Gastrocnemius medialis (tissue), 4 donors: ENCODE measurements at regions of chr3 and their contacts with region 1.

Region 1: GRCh38 chr3:40179016-40179415 is 130.5 kb upstream of the EIF1B start:
- DNase-seq: peak; percentile 32 to 48
- ATAC-seq: peak; percentile 55 to 78
- H3K4me3 ChIP-seq: no peak overlapping the region
- H3K27ac ChIP-seq: no peak overlapping the region
- H3K4me1 ChIP-seq: no peaks in the 10 kb centered on the region
- H3K27me3 ChIP-seq: no peaks in the 10 kb centered on the region
- CTCF ChIP-seq: peak; percentile 48 to 74 (median 69)
- POLR2A ChIP-seq: no peak

Region 2: DNA sequence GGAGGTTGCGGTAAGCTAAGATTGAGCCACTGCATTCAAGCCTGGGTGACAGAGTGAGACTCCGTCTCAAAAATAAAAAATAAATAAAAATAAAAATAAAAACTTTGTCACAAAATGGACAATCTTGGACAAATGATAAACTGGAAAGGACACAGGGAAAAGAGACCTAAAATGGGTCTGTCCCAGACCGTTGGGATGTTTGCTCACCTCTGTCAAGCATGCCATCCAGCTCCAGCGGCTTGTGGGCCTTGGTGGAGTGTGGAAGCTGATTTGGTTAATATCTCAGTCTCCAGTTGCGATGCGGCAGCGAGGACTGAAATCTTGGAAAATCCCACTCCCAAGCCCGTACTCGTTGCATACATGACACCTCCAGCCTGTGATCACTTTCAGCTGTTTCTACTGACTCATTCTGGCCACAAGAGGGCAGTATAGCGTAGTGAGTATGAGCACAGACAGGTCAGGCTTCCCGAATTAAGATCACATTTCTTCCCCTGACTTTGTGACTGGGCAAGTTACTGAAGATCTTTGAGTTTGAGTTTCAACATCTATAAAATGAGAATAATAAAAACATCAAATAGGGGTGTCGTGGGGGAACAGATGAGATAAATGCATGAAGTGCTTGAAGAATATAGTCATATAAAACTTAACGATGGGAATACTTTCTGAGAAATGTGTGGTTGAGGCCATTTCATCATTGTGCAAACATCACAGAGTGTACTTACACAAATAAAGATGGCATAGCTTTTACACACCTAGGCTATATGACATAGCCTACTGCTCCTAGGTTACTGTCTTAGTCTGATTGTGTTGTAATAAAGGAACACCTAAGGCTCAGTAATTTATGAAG is 731.2 kb before region 1 on chr3:
- in situ Hi-C with region 1: no loop called
- intact Hi-C with region 1: loop called (anchors 5 kb)
- DNase-seq: peak; percentile 44 to 50
- ATAC-seq: peak; percentile 98
- H3K4me3 ChIP-seq: no peak overlapping the region
- H3K27ac ChIP-seq: no peak overlapping the region
- H3K4me1 ChIP-seq: no peaks in the 10 kb centered on the region
- H3K27me3 ChIP-seq: no peaks in the 10 kb centered on the region
- CTCF ChIP-seq: peak; percentile 71 to 88 (median 78)
- POLR2A ChIP-seq: no peak

Region 3: DNA sequence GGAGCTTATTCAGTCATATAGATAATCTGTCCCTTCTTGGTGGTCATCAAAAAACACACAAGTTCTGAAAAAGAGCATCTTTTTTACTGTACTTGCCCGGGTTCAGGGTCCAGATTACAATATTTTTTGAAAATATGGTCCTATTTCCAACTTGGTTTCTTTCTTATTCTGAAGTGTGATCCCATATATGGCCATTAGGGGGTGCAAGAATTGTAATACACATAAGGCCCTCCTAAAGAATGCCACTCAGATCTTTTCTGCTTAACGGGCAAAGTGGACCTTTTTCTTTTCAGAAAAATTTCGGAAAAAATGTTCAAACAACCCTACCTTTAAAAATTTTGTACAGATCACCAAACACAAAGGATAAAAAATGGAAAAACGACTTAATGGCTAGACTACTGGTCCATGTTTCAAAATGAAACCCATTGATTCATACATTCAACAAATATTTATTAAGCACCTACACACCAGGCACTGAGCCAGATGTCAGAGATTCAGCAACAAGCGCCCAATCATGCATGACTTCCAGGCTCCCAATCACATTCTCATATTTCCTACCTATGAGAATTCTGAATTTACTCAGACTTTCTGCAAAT is 471.6 kb before region 1 on chr3:
- in situ Hi-C with region 1: loop called in 3 of 4 experiments (anchors 10 to 25 kb)
- intact Hi-C with region 1: loop called (anchors 2 kb)
- DNase-seq: no peak
- ATAC-seq: no peak
- H3K4me3 ChIP-seq: no peak overlapping the region
- H3K27ac ChIP-seq: no peak overlapping the region
- H3K4me1 ChIP-seq: no peaks in the 10 kb centered on the region
- H3K27me3 ChIP-seq: no peaks in the 10 kb centered on the region
- CTCF ChIP-seq: peak; percentile 33 to 67 (median 52)
- POLR2A ChIP-seq: no peak

Region 4: GRCh38 chr3:39724233-39724846 is 454.7 kb before region 1 on chr3:
- in situ Hi-C with region 1: loop called in 3 of 4 experiments (anchors 10 to 25 kb)
- intact Hi-C with region 1: loop called (anchors 5 kb)
- DNase-seq: no peak
- ATAC-seq: no peak
- H3K4me3 ChIP-seq: no peak overlapping the region
- H3K27ac ChIP-seq: no peak overlapping the region
- H3K4me1 ChIP-seq: no peaks in the 10 kb centered on the region
- H3K27me3 ChIP-seq: no peaks in the 10 kb centered on the region
- CTCF ChIP-seq: peak in 2 of 5 experiments; percentile 6 to 35
- POLR2A ChIP-seq: no peak

Region 5: GRCh38 chr3:40464339-40465110 is 285.5 kb after region 1 on chr3:
- in situ Hi-C with region 1: no loop called
- intact Hi-C with region 1: no loop called
- DNase-seq: no peak
- ATAC-seq: no peak
- H3K4me3 ChIP-seq: no peak overlapping the region
- H3K27ac ChIP-seq: no peak overlapping the region
- H3K4me1 ChIP-seq: no peaks in the 10 kb centered on the region
- H3K27me3 ChIP-seq: no peaks in the 10 kb centered on the region
- CTCF ChIP-seq: no peak
- POLR2A ChIP-seq: no peak

Region 6: GRCh38 chr3:40505599-40506462 is 326.8 kb after region 1 on chr3 and contains the start of gene ZNF620:
- in situ Hi-C with region 1: no loop called
- intact Hi-C with region 1: no loop called
- DNase-seq: peak; percentile 41 to 78
- ATAC-seq: peak; percentile 65 to 91
- H3K4me3 ChIP-seq: peak within 1 kb of the TSS; percentile 64 to 76 (median 70)
- H3K27ac ChIP-seq: peak within 1 kb of the TSS; percentile 77 to 86 (median 82)
- H3K4me1 ChIP-seq: peaks cover 10 to 13% of the 10 kb centered on the region in 2 donors
- H3K27me3 ChIP-seq: no peaks in the 10 kb centered on the region
- CTCF ChIP-seq: peak in 2 of 5 experiments; percentile 21 to 45
- POLR2A ChIP-seq: peak; percentile 32 to 48
- total RNA-seq, gene ZNF620: 0.33 to 4.2 (median 1.9) TPM